ENCODE measurements at regions of chr12 and their contacts with region 1.

Region 1: GRCh38 chr12:122399592-122400373 is 22.7 kb downstream of the CLIP1 start:
- DNase-seq: peak; percentile 75 to 82
- ATAC-seq: peak; percentile 91
- H3K4me3 ChIP-seq: no peak overlapping the region
- H3K27ac ChIP-seq: peak overlapping the region; percentile 98 to 100
- H3K4me1 ChIP-seq: no peaks in the 10 kb centered on the region
- H3K27me3 ChIP-seq: no peaks in the 10 kb centered on the region

Region 2: DNA sequence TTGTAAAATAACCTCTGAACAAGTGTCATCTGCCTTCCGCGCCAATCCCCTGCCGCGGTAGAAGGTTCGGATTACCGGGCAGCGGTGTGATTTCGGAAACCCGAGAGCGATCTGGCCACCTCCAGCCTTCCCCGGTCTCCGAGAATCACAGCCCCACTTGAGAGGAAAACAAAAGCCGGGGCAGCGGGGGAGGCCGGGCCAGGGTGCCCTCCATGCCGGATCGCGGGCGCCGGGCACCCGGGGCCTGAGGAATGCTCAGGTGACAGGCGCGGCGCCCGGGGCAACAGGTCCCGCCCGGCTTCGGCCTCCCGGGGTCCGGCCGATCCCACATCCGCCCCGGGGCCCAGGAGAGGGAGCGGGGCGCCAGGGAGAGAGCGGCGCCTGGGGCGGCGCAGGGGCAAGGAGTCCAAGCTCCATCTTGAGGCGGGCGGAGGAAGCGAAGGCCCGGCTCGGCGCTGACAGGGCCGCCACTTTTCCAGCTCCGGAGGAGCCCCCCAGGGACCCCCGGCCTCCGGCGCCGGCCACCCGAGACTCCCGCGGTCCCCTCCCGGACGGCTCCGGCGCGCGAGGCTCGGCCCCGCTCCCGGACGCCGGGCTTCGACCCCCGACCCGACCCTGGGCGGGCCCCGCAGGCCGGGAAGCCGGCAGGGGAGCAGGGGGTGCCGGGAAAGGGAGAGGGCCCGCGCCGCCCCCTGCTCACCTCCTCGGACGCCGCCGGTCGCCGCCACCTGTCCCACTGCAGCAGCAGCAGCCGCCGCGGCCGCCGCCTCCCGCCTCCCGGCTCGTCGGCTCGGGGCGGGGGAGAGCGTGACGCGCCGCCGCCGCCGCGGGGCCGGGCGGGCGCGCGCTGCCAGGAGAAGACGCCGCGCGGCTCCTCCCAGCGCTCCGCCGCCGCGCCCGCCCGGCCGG is 22.3 kb after region 1 on chr12 and contains the start of gene CLIP1:
- intact Hi-C with region 1: loop called in 1 of 2 experiments (anchors 1 kb)
- DNase-seq: peak; percentile 69 to 88
- ATAC-seq: peak; percentile 89
- H3K4me3 ChIP-seq: peak within 1 kb of the TSS; percentile 89 to 99
- H3K27ac ChIP-seq: peak within 1 kb of the TSS; percentile 97 to 98
- H3K4me1 ChIP-seq: no peaks in the 10 kb centered on the region
- H3K27me3 ChIP-seq: no peaks in the 10 kb centered on the region
- total RNA-seq, gene CLIP1: 125 to 182 TPM

Region 3: GRCh38 chr12:122659519-122659918 is 259.7 kb after region 1 on chr12:
- intact Hi-C with region 1: no loop called
- DNase-seq: no peak
- ATAC-seq: no peak
- H3K4me3 ChIP-seq: no peak overlapping the region
- H3K27ac ChIP-seq: no peak overlapping the region
- H3K4me1 ChIP-seq: no peaks in the 10 kb centered on the region
- H3K27me3 ChIP-seq: no peaks in the 10 kb centered on the region

Measured in aorta (tissue), 5 donors.